ENCODE measurements at regions of chr6 and their contacts with region 1.

Region 1: DNA sequence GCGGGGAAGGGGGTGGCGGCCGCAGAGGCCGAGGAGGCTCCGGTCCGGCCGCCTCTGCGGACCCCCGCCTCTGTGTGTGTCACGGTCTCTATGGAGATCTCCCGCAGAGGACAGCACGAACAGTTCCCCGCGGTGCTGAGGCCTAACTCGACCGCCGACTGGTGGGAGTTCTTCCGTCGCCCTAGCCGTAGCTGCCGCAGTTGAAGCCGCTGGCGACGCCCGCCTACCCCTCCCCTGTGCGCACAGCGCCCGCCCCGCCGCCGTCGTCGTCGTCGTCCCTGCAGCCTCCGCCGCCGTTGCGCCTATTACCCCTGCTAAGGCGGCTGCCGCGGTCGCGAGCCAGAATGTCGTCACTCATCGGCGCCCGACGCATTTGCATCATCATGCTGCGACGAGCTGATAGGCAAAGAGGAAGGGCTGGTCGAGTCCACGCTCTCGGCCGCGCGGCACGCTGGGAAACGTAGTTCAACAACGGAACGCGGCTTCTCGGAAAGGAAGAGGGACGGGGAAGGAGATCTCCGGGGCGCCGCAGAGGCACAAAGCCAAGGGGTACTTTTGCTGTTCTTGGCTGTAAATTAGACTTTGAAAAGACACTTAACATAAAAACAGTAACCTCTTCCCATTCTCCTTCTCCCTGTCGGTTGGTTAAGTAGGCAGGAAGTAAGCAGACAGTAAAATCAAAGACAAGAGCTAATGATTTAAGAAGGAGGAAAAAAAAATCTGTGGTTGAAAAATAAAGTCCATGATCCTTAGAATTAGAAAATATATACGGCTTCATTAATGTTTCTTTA is at the start of gene NUP153:
- DNase-seq: peak; percentile 88
- ATAC-seq: peak; percentile 92
- H3K4me3 ChIP-seq: peak within 1 kb of the TSS; percentile 88 to 90
- H3K27ac ChIP-seq: peak within 1 kb of the TSS; percentile 95
- H3K4me1 ChIP-seq: peaks cover 21% of the 10 kb centered on the region
- H3K27me3 ChIP-seq: no peaks in the 10 kb centered on the region
- CTCF ChIP-seq: no peak
- total RNA-seq, gene NUP153: 62.0 TPM

Region 2: DNA sequence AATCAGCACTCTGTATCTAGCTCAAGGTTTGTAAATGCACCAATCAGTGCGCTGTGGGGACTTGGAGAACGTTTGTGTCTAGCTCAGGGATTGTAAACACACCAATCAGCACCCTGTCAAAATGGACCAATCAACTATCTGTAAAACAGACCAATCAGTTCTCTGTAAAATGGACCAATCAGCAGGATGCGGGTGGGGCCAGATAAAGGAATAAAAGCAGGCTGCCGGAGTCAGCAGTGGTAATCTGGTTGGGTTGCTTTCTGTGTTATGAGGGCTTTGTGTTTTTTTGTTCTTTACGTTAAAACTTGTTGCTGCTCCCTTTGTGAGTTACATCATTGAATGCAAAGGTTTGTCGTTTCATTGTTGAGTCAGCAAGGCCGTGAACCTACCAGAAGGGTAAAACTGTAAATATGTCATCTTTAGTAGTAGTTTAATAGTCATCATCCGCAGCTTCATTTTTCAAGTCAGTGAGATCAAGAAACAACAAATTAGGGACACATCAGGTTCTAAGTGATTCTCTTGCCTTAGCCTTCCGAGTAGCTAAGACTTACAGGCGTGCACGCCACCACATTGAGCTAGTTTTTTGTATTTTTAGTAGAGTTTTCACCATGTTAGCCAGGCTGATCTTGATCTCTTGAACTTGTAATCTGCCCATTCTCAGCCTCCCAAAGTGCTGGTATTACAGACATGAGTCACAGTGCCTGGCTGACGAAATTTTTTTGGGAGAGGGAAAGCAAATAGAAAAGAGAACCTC is 22.7 kb after region 1 on chr6:
- CTCF ChIA-PET with region 1: interaction called, 3 read pairs
- POLR2A ChIA-PET with region 1: interaction called, 11 read pairs
- in situ Hi-C with region 1: no loop called
- intact Hi-C with region 1: no loop called
- DNase-seq: no peak
- ATAC-seq: no peak
- H3K4me3 ChIP-seq: no peak overlapping the region
- H3K27ac ChIP-seq: no peak overlapping the region
- H3K4me1 ChIP-seq: no peaks in the 10 kb centered on the region
- H3K27me3 ChIP-seq: no peaks in the 10 kb centered on the region
- CTCF ChIP-seq: no peak

Region 3: DNA sequence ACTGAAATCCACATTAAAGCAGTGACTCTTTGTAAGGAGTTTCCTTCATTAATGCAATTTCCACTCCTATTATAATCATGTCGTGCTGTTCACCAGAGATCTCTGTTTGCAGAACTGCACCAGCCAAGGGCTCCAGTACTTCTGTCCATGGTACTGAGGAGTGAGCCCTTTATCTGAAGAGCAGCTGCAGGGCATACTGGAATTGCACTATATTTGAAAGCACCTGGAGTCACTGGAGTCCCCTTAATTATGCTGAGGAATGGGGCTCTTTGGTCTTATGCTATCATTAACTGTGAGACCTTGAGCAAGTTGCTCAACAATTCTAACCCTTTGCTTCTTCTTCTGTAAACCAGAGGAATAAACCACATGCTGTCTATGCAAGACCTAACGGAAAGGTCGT is 61.6 kb after region 1 on chr6:
- CTCF ChIA-PET with region 1: interaction called, 12 read pairs
- POLR2A ChIA-PET with region 1: no interaction called
- in situ Hi-C with region 1: no loop called
- intact Hi-C with region 1: no loop called
- DNase-seq: no peak
- ATAC-seq: no peak
- H3K4me3 ChIP-seq: no peak overlapping the region
- H3K27ac ChIP-seq: no peak overlapping the region
- H3K4me1 ChIP-seq: no peaks in the 10 kb centered on the region
- H3K27me3 ChIP-seq: no peaks in the 10 kb centered on the region
- CTCF ChIP-seq: no peak

Region 4: DNA sequence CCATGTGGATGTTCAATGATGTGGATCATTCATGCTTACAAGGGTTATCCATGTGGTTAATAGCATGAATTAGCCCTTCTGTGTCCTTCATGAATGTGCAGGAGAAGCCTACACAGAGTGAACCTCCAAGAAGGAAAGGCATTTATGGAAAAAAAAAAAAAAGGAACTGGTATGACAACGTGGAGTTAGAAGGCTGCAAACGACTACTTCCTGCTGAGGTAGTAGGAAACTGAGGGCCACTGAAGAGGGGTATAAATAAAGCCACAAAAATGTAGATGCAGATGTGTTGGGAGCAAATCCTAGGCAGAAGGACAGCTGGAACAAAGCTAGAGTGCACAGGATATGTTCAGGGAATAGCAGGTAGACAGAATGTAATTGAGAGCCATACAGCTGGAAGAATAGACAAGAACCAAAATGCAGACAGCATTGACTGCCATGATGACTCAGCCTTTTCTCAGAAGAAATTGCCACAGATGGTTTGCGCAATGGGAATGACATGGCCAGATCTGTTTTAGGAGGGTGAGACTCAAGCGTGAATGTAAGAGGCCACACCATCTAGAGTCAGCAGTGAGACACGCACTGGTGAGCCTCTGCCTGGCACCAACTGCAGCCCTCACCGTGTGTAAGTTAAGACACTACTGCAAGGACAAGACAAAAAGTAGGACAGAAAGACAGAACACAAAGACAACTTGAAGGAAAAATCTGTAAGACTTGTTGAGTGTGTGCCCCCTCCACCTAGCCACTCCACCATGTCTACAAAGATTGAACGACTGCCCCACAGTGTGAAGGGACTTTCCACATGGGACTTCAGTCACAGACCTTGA is 200.8 kb after region 1 on chr6:
- CTCF ChIA-PET with region 1: no interaction called
- POLR2A ChIA-PET with region 1: no interaction called
- in situ Hi-C with region 1: no loop called
- intact Hi-C with region 1: no loop called
- DNase-seq: peak; percentile 82
- ATAC-seq: peak; percentile 78; the same call in 1 of the 2 replicates
- H3K4me3 ChIP-seq: no peak overlapping the region
- H3K27ac ChIP-seq: peak overlapping the region; percentile 30
- H3K4me1 ChIP-seq: no peaks in the 10 kb centered on the region
- H3K27me3 ChIP-seq: no peaks in the 10 kb centered on the region
- CTCF ChIP-seq: no peak

Region 5: GRCh38 chr6:17972074-17972952 is 265.5 kb after region 1 on chr6:
- CTCF ChIA-PET with region 1: no interaction called
- POLR2A ChIA-PET with region 1: no interaction called
- in situ Hi-C with region 1: no loop called
- intact Hi-C with region 1: no loop called
- DNase-seq: no peak
- ATAC-seq: no peak
- H3K4me3 ChIP-seq: no peak overlapping the region
- H3K27ac ChIP-seq: peak overlapping the region; percentile 18; the same call in 1 of the 2 replicates
- H3K4me1 ChIP-seq: peaks cover 14% of the 10 kb centered on the region
- H3K27me3 ChIP-seq: no peaks in the 10 kb centered on the region
- CTCF ChIP-seq: no peak

Region 6: GRCh38 chr6:19180344-19181072 is 1473.7 kb after region 1 on chr6:
- CTCF ChIA-PET with region 1: no interaction called
- POLR2A ChIA-PET with region 1: no interaction called
- in situ Hi-C with region 1: no loop called
- intact Hi-C with region 1: no loop called
- DNase-seq: no peak
- ATAC-seq: peak; percentile 56; the same call in 1 of the 2 replicates
- H3K4me3 ChIP-seq: no peak overlapping the region
- H3K27ac ChIP-seq: peak overlapping the region; percentile 39; the same call in 1 of the 2 replicates
- H3K4me1 ChIP-seq: no peaks in the 10 kb centered on the region
- H3K27me3 ChIP-seq: no peaks in the 10 kb centered on the region
- CTCF ChIP-seq: no peak

Measured in Panc1 (cell line).